ENCODE measurements at regions of chr17 and their contacts with region 1.

Region 1: DNA sequence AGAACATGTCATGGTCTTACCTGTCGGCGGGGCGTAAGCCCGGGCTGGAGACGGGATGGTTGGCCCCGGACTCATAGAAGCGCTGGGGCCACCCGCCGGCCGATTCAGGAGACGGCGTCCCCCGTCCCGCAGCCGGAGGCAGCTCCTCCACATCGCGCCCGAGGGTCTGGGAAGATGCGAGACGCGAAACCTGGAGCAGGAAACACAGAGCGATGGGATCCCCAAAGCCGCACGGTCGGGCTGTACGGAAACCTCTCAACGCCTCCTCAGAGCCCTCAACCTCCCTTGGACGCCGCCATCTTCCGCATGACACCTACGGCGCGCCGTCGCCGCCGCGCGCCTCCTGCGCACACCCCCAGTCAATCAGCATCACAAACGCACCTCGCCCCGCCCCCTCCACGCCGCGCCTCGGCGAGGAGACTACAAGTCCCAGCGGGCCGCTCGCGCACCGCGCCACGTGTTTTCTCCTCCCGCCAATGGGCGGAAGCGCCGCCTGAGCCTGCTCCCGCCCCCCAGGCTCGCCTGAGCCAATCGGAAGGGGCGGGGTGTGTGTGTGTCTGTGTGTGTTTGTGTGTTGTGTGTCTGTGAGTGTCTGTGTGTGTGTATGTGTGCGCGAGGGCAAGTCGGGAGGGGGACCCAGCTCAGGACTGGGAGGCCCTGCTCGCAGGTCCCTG is at the starts of genes ATPAF2 and GID4:
- DNase-seq: peak; percentile 100
- ATAC-seq: peak; percentile 98
- H3K4me3 ChIP-seq: peak within 1 kb of the TSS; percentile 83
- H3K27ac ChIP-seq: peak within 1 kb of the TSS; percentile 58
- H3K4me1 ChIP-seq: peaks cover 16% of the 10 kb centered on the region
- H3K27me3 ChIP-seq: no peaks in the 10 kb centered on the region
- total RNA-seq, gene ATPAF2: 22.0 to 31.6 (median 29.3) TPM
- total RNA-seq, gene GID4: 13.8 to 20.7 (median 15.5) TPM

Region 2: DNA sequence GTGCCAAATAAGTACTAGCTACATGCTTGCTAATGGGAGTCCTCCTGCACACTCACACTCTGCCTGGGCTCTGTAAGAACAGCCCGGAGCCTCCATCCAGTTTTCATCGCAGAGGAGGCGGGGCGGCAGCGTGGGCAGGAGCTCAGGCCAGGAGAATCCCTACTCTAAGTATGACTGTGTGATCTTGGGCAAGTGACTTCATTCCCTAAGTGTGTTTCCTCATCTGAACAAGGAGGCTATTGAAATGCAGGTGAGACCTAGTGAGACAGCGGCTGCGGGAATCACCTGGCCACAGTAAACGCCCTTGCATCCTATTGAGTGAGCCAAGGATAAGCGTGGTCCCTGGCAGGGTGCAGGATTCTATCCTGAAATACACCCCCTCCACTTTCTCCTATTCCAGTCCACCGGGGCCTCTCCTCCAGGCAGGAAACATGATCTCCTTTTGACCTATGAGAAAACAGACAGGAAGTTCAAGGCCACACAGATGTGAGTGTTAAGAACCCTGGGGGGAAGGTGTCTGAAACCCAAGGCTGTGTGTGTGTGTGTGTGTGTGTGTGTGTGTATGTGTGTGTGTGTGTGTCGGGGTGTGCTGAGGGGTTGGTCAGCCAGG is 363.0 kb before region 1 on chr17:
- intact Hi-C with region 1: loop called in 3 of 4 experiments (anchors 5 to 10 kb)
- DNase-seq: peak in 1 of 3 donors; percentile 16
- ATAC-seq: no peak
- H3K4me3 ChIP-seq: no peak overlapping the region
- H3K27ac ChIP-seq: no peak overlapping the region
- H3K4me1 ChIP-seq: no peaks in the 10 kb centered on the region
- H3K27me3 ChIP-seq: no peaks in the 10 kb centered on the region

Region 3: GRCh38 chr17:17890773-17891759 is 147.9 kb before region 1 on chr17:
- intact Hi-C with region 1: loop called in 1 of 4 experiments (anchors 10 kb)
- DNase-seq: peak; percentile 55 to 72 (median 72)
- ATAC-seq: peak; percentile 60 to 72
- H3K4me3 ChIP-seq: no peak overlapping the region
- H3K27ac ChIP-seq: no peak overlapping the region
- H3K4me1 ChIP-seq: peaks cover 6% of the 10 kb centered on the region
- H3K27me3 ChIP-seq: no peaks in the 10 kb centered on the region

Region 4: DNA sequence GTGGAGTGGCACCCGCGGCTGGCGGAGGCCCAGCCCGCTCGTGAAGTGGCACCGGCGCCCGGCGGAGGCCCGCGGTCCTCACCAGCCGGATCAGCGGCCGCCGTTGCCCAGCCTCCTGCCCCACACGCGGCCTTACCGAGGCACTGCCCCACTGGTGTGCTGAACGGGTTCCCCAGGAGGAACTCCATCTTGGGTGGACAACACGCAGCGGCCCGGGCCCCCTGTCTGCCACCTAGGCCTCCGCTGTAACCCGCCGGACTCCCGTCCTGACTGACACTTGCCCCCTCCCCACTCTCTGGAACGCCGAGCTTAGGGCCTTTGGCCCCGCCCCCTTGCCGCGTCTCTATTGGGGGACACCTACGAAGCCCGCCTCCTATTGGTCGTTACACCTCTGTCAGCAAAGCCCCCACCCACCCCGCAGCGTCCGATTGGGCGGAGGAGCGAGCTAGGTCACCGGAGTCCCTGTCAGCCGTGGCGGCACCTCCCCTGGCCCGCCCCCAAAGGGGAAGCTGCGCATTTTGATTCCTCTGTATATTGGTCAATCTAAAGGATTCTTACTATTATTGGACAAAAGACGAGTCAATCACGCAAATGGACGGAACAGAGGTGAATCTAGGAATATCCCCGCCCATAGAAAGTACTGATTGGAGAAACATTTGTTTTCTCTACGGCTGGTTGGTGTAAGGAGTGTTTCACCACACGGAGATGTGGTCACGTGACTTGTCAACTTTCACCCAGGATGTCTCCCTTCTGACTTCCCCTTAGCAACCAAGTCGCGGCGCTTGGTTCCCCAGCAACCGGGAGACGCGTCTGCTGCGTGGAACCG is 66.7 kb before region 1 on chr17 and contains the starts of genes DRC3 and TOM1L2:
- intact Hi-C with region 1: loop called in 1 of 4 experiments (anchors 10 kb)
- DNase-seq: peak; percentile 100
- ATAC-seq: peak; percentile 98
- H3K4me3 ChIP-seq: peak within 1 kb of the TSS; percentile 89
- H3K27ac ChIP-seq: peak within 1 kb of the TSS; percentile 68
- H3K4me1 ChIP-seq: peaks cover 6% of the 10 kb centered on the region
- H3K27me3 ChIP-seq: no peaks in the 10 kb centered on the region
- total RNA-seq, gene DRC3: 1.4 to 3.2 (median 2.3) TPM
- total RNA-seq, gene TOM1L2: 196 to 248 (median 227) TPM

Region 5: GRCh38 chr17:18158022-18158600 is 119.1 kb after region 1 on chr17:
- intact Hi-C with region 1: no loop called
- DNase-seq: peak; percentile 96 to 98 (median 98)
- ATAC-seq: peak; percentile 63 to 69
- H3K4me3 ChIP-seq: peak overlapping the region; percentile 35
- H3K27ac ChIP-seq: peak overlapping the region; percentile 23
- H3K4me1 ChIP-seq: no peaks in the 10 kb centered on the region
- H3K27me3 ChIP-seq: no peaks in the 10 kb centered on the region